HEK293 (cell line): ENCODE measurements at regions of chr6 and their contacts with region 1.

Region 1: GRCh38 chr6:44041461-44042260 is 85.6 kb downstream of the MRPL14 start:
- H3K4me3 ChIP-seq: no peak overlapping the region
- H3K27ac ChIP-seq: no peak overlapping the region; the same call in 1 of the 2 replicates
- H3K4me1 ChIP-seq: peaks cover 7% of the 10 kb centered on the region; the same call in 1 of the 2 replicates
- CTCF ChIP-seq: no peak

Region 2: DNA sequence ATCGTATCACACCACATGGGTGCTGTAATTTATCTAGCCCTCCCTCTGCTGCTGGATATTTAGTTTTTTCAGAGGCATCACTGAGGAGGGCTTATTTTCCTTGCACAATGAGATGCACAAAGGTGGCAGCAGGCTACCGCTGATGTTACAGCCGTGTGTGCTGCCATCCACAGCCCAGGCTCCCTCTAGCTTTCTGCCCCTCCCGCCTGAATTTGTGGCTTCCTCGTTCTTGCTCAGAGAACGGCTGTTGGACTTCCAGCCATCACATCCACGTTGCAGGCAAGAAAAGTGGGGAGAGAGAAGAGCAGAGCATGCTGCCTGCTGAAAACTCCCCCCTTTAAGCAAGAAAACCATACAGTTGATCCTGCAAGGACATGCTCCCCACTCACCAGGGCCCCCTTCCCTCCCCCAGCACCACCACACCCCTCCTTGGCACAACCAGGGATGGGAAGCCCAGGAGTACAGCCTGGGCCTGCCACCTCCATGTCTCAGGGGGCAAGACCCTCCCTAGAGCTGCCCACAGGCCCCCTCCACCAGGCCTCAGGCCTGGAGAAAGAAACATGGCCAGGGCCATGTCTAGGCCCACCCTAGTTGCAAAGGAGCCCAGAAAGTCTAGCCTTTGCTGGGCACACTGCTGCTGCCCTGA is 17.0 kb before region 1 on chr6:
- CTCF ChIA-PET with region 1: no interaction called
- POLR2A ChIA-PET with region 1: no interaction called
- H3K4me3 ChIP-seq: no peak overlapping the region
- H3K27ac ChIP-seq: no peak overlapping the region
- H3K4me1 ChIP-seq: no peaks in the 10 kb centered on the region
- CTCF ChIP-seq: no peak

Region 3: DNA sequence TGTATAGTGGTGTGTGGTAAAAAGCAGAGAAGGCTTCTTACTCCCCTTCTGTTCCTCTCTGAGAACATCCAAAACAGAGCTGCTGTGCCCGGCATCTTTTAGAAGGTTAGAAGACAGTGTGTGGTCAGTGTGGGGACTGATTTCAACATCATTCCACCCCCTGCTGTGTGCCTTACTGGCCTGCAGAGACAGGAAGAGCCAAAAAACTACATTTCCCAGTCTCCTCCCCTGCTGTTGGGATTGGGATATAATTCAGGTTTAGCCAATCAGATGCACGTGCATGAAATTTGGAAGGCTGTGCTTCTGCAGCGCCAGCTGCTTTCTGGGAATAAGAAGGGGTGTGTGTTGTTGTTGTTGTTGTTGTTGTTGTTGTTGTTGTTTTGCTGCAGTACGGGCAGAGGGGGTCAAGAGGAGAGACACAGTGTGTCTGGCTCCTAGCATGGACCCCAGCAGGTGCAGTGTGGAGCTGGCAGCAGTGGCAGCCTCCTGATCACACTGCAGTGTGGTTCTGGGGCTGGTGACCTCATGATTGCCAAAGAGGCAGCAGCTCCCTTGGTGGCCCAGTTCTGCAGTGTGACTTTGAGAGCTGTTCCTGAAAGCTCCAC is 10.9 kb after region 1 on chr6:
- CTCF ChIA-PET with region 1: interaction called, 16 read pairs
- POLR2A ChIA-PET with region 1: interaction called, 12 read pairs
- H3K4me3 ChIP-seq: no peak overlapping the region
- H3K27ac ChIP-seq: no peak overlapping the region
- H3K4me1 ChIP-seq: no peaks in the 10 kb centered on the region
- CTCF ChIP-seq: no peak

Region 4: GRCh38 chr6:44058617-44059358 is 17.1 kb after region 1 on chr6:
- CTCF ChIA-PET with region 1: interaction called, 16 read pairs
- POLR2A ChIA-PET with region 1: interaction called, 12 read pairs
- H3K4me3 ChIP-seq: no peak overlapping the region
- H3K27ac ChIP-seq: no peak overlapping the region
- H3K4me1 ChIP-seq: no peaks in the 10 kb centered on the region
- CTCF ChIP-seq: no peak

Region 5: DNA sequence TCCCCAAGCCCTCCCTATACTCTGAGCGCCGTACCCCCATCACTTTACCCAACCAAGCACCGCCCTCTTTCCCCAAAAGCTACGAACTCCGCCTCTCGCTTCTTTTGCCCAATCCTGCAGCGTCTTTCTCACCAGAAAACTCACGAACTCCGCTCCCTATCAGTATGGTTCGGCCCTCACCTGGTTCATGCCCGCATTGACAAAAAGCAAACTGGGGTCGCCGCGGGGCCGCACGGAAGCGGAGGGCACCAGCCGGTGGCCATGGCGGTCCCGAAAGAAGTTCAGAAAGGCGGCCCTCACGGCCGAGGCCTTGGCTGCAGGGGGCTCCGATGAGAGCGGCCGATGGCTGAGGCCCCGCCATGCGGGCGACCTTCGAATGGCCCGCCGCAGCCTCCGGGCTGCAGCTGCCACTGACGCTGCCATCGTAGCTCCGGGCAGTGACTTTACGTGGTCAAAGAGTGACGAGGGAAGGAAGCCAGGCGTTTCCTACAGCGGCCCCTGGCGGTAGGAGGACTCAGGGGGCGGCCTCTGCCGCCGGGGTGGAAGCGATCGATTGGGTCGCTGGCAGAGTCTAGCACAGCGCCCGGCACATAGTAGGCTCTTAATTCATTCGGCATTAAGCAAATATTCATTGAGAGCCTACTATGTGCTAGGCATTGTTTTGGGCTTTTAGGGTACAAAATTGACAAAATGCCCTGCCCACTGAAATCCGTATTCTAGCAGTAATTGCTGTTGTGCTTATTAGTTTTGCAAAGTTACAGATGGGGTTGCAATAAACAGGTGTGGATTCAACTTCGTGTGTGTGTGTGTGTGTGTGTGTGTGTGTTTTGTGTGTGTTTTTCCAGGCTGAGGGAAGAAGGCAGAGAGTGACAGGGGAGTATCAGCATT is 271.5 kb after region 1 on chr6 and contains the start of gene AARS2:
- CTCF ChIA-PET with region 1: no interaction called
- POLR2A ChIA-PET with region 1: no interaction called
- H3K4me3 ChIP-seq: peak within 1 kb of the TSS; percentile 69
- H3K27ac ChIP-seq: peak within 1 kb of the TSS; percentile 71; the same call in 1 of the 2 replicates
- H3K4me1 ChIP-seq: peaks cover 5% of the 10 kb centered on the region; the same call in 1 of the 2 replicates
- CTCF ChIP-seq: peak; percentile 98